HEK293T (cell line): ENCODE measurements at regions of chr11 and their contacts with region 1.

Region 1: GRCh38 chr11:72222907-72223614 is 1.5 kb upstream of the INPPL1 start:
- DNase-seq: peak; percentile 88

Region 2: GRCh38 chr11:72179066-72179803 is 43.8 kb before region 1 on chr11:
- CTCF ChIA-PET with region 1: no interaction called
- POLR2A ChIA-PET with region 1: no interaction called
- DNase-seq: no peak

Region 3: GRCh38 chr11:72189461-72190275 is 33.4 kb before region 1 on chr11:
- CTCF ChIA-PET with region 1: interaction called, 4 read pairs
- POLR2A ChIA-PET with region 1: interaction called, 11 read pairs
- DNase-seq: no peak

Region 4: DNA sequence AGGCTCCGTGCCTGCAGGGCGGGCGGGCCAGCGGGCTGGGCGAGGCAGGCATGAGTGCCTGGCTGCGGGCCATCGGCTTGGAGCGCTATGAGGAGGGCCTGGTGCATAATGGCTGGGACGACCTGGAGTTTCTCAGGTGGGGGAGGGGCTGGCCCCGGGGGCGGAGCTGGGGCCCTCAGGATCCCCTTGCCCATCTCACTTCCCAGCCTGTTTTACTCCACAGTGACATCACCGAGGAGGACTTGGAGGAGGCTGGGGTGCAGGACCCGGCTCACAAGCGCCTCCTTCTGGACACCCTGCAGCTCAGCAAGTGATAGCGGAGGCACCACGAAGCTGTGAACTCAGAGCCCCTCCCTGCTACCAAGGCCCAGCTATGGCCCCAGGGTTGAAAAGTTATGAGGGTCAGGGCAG is 15.0 kb after region 1 on chr11:
- CTCF ChIA-PET with region 1: interaction called, 7 read pairs
- POLR2A ChIA-PET with region 1: interaction called, 45 read pairs
- DNase-seq: peak; percentile 85